ENCODE measurements at regions of chr1 and their contacts with region 1.

Region 1: DNA sequence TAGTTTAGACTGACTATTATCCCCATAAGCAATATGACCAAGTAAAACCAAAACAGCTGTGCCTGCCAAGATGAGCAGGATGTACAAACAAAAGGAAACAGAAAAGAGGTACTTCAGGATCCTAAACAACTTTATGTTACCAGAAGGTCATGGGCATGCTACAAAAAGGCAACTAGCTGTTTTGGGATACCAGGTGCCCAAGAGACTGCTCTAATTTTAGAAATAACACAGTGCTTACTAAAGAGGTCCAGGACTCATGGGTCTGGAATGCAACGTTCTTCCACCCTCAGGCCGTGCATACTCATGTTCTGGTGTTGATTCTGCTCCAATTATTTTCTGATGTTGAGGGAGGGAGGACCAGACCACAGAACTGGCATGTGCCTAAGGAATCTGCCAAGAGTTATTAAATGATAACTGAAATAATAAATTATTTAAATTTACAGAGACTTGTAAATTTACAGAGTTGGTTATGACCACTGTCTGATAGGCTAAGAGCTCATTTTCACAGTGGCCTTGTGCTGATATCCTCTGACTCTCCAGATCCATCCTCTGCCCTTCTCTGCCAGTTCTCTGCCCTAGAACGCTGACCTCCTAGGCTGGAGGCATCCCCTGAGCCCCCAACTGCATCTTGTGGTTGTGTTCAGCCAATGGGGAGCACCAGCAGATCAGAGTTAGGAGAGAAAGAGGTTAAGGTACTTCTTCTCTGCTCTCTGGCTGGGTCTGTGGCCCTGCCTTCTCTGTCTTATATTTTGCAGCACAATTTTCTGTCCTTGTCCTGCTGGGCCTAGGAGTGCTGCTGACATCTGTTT is 37.7 kb upstream of the BCL10 start:
- DNase-seq: no peak
- ATAC-seq: peak; percentile 85 to 96

Region 2: DNA sequence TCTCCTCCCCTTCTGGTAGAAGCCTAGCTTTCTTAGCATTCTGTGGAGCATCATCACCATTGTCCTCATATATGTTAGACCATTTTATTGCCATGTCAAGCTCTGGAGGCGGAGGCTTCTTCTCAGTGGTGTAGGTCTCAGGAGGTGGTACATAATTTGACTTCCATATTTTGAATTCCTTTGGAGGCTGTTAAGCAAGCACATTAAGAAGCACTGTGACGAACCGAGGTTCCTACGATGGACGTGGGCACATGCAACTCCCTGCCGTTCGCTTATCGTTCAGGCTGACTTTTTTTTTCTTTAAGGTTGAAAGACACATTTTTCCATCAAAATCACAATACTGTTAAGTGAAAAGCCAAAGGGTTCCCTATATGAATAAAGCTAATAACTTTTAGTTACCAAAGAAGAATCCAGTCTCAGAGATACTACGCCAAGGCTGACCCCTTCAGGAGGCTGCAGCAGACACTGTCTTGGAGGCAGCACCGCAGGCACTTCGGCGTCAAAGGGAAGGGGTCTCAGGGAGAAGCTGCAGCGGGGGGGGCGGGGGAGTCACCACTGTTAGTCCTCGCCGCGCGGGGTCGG is 55.5 kb before region 1 on chr1:
- intact Hi-C with region 1: no loop called
- DNase-seq: no peak
- ATAC-seq: no peak

Region 3: GRCh38 chr1:85330711-85331290 is 16.7 kb after region 1 on chr1:
- intact Hi-C with region 1: loop called in 1 of 2 experiments (anchors 2 kb)
- DNase-seq: peak; percentile 71
- ATAC-seq: peak; percentile 85 to 88

Region 4: DNA sequence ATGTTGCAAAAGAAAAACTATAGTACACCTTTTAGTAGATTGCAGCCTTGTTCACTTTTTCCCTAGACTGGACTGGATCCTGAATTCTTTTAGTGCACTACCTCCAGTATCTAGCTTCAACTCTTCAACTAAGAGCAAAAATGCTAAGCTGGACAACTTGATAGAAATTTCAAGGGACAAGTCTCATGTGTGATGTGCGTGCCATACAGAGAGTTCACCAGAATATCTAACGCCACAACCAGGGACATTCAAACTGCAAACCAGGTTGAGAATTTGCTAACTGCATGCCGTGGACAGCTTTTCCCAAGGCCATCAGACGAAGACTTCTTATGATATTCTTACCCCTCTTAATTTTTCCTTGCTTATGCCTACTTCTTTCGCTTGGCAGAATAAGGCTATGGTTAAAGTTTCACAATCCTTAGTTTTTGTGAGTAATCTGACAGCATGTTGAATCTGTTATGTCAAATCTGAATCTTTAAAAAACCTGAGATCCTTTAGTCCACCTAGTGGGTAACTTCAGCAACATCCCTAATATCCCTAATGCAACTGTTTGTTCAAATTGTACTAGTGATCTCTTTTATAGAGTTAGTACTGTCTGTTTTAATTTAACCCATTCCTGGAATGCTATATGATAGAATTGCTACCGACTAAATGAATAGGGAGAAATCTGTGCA is 84.4 kb after region 1 on chr1:
- intact Hi-C with region 1: loop called (anchors 2 to 5 kb)
- DNase-seq: no peak
- ATAC-seq: peak; percentile 26 to 62

Measured in left cardiac atrium (tissue), 4 donors.